H1 (cell line): ENCODE measurements at regions of chr6 and their contacts with region 1.

Region 1: DNA sequence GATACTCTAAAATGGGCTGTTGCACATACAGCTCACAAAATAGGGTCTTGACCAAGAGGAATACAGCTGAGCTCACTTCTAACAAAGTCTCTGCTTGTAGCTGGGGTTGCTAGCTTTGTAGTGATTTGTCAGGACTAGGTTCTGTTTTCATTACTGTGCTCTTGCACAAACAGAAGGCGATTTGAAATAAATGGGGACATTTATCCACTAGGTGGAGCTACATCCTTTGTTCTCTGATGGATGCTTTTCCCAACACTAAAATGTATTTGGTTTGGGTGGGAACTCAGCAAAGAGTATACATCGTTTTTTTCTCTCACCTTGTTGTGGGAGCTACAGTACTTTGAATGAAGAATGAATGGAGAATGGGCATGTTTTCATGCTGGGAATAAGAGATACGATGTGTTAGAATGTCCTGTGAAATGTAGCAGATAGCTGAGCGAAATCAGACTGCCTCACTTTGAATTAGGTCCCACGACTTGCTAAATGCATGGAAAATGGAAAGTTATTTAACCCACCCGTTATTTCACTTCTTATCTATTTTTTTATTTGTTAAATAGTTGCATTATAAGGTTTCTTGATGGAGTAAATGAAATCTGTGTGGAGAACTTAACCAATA is 494.7 kb upstream of the MAP3K7 start:
- DNase-seq: no peak
- H3K4me3 ChIP-seq: no peak overlapping the region
- H3K27ac ChIP-seq: no peak overlapping the region
- H3K4me1 ChIP-seq: peaks cover 0 to 10% (median 6%) of the 10 kb centered on the region in 4 experiments; a peak in 5 of 7 replicates
- H3K27me3 ChIP-seq: no peaks in the 10 kb centered on the region
- CTCF ChIP-seq: peak in 2 of 3 experiments; percentile 59 to 77; a peak in 2 of 4 replicates
- EP300 ChIP-seq: no peak
- POLR2A ChIP-seq: no peak
- RAD21 ChIP-seq: peak; percentile 85 to 88

Region 2: GRCh38 chr6:91173651-91174050 is 92.1 kb after region 1 on chr6:
- CTCF ChIA-PET with region 1: interaction called, 21 read pairs
- POLR2A ChIA-PET with region 1: no interaction called
- DNase-seq: no peak
- H3K4me3 ChIP-seq: no peak overlapping the region
- H3K27ac ChIP-seq: no peak overlapping the region
- H3K4me1 ChIP-seq: peaks cover 0 to 11% (median 2%) of the 10 kb centered on the region in 4 experiments; a peak in 3 of 7 replicates
- H3K27me3 ChIP-seq: no peaks in the 10 kb centered on the region
- CTCF ChIP-seq: no peak
- EP300 ChIP-seq: no peak
- POLR2A ChIP-seq: no peak
- RAD21 ChIP-seq: no peak

Region 3: GRCh38 chr6:91276315-91276714 is 194.8 kb after region 1 on chr6:
- CTCF ChIA-PET with region 1: interaction called, 40 read pairs
- POLR2A ChIA-PET with region 1: no interaction called
- DNase-seq: no peak
- H3K4me3 ChIP-seq: no peak overlapping the region
- H3K27ac ChIP-seq: no peak overlapping the region
- H3K4me1 ChIP-seq: peaks cover 0 to 10% (median 4%) of the 10 kb centered on the region in 4 experiments; a peak in 3 of 7 replicates
- H3K27me3 ChIP-seq: no peaks in the 10 kb centered on the region
- CTCF ChIP-seq: peak in 2 of 3 experiments; percentile 67 to 69; a peak in 3 of 4 replicates
- EP300 ChIP-seq: no peak
- POLR2A ChIP-seq: no peak
- RAD21 ChIP-seq: peak; percentile 67 to 68

Region 4: GRCh38 chr6:91288741-91289140 is 207.2 kb after region 1 on chr6:
- CTCF ChIA-PET with region 1: interaction called, 33 read pairs
- POLR2A ChIA-PET with region 1: no interaction called
- DNase-seq: no peak
- H3K4me3 ChIP-seq: no peak overlapping the region
- H3K27ac ChIP-seq: no peak overlapping the region
- H3K4me1 ChIP-seq: no peaks in the 10 kb centered on the region
- H3K27me3 ChIP-seq: peaks cover 6 to 44% (median 28%) of the 10 kb centered on the region in 4 experiments
- CTCF ChIP-seq: no peak
- EP300 ChIP-seq: no peak
- POLR2A ChIP-seq: no peak
- RAD21 ChIP-seq: no peak

Region 5: DNA sequence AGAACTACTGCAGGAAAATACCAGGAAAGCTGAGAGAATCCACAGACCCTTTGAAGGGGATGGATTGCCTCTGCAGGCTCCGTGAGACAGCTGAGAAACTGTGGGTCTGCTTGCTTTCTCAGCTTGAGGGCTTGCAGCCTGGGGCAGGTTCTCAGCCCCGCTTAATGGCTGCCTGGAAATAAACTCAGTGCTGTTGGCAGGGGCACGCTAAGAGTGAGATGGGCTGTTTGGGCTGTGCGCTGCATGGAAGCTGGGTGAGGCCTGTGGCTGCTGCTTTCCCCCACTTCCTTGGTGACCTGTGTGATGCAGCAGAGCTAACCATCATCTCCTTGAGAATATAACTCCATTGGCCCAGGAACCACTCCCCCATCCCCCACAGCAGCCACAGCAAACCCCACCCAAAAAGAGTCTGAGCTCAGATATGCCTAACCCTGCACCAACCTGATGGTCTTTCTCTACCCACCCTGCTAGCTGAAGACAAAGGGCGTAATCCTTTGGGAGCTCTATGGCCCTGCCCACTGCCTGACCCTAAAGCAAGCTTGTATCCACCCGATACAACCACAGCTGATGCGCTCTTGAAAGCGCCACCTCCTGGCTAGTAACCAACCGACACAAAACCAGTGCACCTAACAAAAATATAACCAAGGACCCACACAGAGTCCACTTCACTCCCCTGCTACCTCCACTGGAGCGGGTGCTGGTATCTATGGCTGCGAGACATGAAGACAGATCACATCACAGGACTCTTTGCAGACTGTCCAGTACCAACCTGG is 305.9 kb after region 1 on chr6:
- CTCF ChIA-PET with region 1: interaction called, 13 read pairs
- POLR2A ChIA-PET with region 1: no interaction called
- DNase-seq: peak; percentile 39 to 68
- H3K4me3 ChIP-seq: no peak overlapping the region
- H3K27ac ChIP-seq: no peak overlapping the region
- H3K4me1 ChIP-seq: peaks cover 0 to 3% (median 0%) of the 10 kb centered on the region in 4 experiments; a peak in 2 of 7 replicates
- H3K27me3 ChIP-seq: no peaks in the 10 kb centered on the region
- CTCF ChIP-seq: peak; percentile 55 to 68 (median 66)
- EP300 ChIP-seq: no peak
- POLR2A ChIP-seq: no peak
- RAD21 ChIP-seq: peak; percentile 57 to 72